ENCODE measurements at regions of chr2 and their contacts with region 1.

Region 1: DNA sequence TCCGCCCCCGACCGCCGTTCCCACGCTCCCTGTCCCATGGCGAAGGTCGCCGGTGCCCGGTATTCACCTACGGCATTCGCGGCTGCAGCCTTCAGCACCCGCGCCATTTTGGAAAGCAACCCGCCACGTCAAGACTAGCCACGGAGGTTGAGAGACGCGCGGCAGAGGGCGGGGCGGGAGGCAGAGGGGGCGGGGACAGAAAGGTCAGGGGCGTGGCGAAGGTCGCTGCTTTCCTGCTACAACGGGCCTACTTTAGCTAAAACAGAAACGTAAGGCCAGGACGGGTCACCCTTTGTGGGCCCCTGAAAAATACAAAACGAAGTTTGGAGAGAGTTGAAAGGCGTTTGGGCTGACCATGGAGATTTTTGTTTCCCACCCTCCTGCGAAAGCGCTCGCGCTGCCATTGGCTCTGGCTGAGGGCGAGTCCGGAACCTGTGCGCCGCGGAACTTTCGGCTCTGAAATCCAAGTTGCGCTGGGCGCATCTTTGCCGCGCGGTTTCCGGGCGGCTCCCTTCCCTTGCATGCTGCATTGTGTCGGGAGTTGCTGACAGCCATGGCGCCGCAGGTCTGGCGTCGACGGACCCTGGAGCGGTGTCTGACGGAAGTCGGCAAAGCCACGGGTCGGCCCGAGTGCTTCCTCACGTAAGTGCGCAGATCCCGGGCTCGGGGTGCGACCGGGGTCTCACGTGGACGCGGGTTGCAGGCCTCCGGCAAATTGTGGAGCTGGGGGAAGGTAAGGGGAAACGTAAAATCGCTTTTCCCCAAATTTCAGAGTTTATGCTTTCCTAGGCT is at the starts of genes MCEE and MPHOSPH10:
- DNase-seq: peak; percentile 81 to 87
- H3K4me3 ChIP-seq: peak within 1 kb of the TSS; percentile 88
- H3K27ac ChIP-seq: peak within 1 kb of the TSS; percentile 87
- H3K4me1 ChIP-seq: peaks cover 40% of the 10 kb centered on the region
- H3K27me3 ChIP-seq: no peaks in the 10 kb centered on the region
- CTCF ChIP-seq: no peak
- total RNA-seq, gene MCEE: 12.5 and 15.8 TPM in 2 replicates
- total RNA-seq, gene MPHOSPH10: 16.0 and 26.9 TPM in 2 replicates

Region 2: DNA sequence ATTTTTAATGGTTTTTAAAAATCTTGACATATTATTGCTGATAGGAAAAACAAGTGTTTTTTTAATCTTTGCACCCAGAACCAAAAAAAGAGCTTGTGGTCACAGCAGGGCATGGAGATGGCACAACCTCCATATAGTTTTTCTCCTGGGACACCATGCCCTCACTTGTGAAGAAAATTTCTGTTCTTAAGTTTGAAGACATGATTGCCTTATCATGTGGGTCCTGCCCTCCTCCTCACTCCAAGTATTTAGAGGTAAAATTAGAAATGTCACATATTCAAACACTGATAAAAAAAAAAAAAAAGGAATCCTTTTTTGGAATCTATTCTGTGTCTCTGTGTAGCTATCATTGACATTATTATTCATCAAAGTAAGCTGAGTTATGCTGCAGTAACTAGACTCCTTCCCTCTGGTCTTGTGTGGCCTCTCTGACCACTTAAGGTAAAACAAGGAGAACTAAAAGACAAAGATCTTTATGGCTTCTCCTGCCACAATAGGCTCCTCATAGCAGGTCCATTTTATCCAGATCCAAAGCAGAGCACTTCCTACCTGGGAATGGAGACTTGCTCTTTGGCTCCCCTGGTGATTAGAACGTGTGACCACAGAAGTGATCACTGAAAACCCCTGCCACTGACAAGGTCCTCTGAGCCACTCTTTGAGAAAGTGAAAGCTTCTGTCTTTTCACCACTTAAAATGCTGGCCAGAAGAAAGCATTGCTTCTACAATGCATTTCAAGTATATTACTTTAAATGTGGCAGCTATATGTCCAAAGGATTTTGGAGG is 382.1 kb before region 1 on chr2:
- CTCF ChIA-PET with region 1: no interaction called
- POLR2A ChIA-PET with region 1: no interaction called
- intact Hi-C with region 1: no loop called
- DNase-seq: no peak
- H3K4me3 ChIP-seq: no peak overlapping the region
- H3K27ac ChIP-seq: no peak overlapping the region
- H3K4me1 ChIP-seq: no peaks in the 10 kb centered on the region
- H3K27me3 ChIP-seq: peaks cover 35% of the 10 kb centered on the region
- CTCF ChIP-seq: no peak

Region 3: DNA sequence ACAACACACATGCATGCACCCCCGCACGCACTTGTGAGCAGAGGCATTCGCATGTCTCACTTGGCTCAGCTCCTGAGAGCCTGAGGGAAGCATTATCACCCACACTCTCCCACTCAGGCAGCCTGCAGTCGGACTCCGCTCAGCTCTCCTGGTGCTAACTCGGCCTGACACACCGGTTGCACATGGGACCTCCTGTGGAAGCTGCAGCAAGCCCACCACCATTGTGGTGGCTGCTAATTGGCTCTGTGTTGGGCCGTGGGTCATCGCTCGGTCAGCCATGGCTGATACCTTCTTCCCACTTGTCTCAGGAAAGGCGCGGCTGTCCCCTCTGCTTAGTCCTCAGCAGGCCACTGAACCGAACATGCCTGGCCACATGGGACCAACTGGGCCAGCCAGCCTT is 122.0 kb before region 1 on chr2:
- CTCF ChIA-PET with region 1: interaction called, 10 read pairs
- POLR2A ChIA-PET with region 1: no interaction called
- intact Hi-C with region 1: no loop called
- DNase-seq: no peak
- H3K4me3 ChIP-seq: no peak overlapping the region
- H3K27ac ChIP-seq: no peak overlapping the region
- H3K4me1 ChIP-seq: no peaks in the 10 kb centered on the region
- H3K27me3 ChIP-seq: no peaks in the 10 kb centered on the region
- CTCF ChIP-seq: no peak

Region 4: DNA sequence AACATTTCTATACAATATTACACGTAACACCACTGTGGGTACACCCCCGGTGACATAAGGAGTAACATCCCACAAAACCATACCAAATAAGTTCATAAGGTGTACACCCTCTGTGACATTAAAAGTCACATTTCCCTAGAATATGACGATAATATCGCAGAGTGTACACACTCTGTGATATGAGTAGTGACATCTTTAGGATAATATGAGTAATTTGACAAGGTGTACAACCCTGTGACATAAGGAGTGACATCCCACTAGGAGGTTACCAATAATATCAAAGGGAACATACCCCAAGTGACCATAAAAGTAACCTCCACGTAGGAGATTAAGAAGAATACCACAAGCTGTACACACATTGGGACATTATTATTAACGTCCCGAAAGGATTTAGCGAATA is 111.7 kb before region 1 on chr2:
- CTCF ChIA-PET with region 1: no interaction called
- POLR2A ChIA-PET with region 1: no interaction called
- intact Hi-C with region 1: loop called (anchors 2 kb)
- DNase-seq: no peak
- H3K4me3 ChIP-seq: no peak overlapping the region
- H3K27ac ChIP-seq: no peak overlapping the region
- H3K4me1 ChIP-seq: peaks cover 9% of the 10 kb centered on the region
- H3K27me3 ChIP-seq: no peaks in the 10 kb centered on the region
- CTCF ChIP-seq: no peak

Region 5: GRCh38 chr2:71068218-71069035 is 61.9 kb before region 1 on chr2 and contains the start of gene NAGK:
- CTCF ChIA-PET with region 1: no interaction called
- POLR2A ChIA-PET with region 1: interaction called, 3 read pairs
- intact Hi-C with region 1: loop called (anchors 1 kb)
- DNase-seq: peak; percentile 86 to 96
- H3K4me3 ChIP-seq: peak within 1 kb of the TSS; percentile 72
- H3K27ac ChIP-seq: peak within 1 kb of the TSS; percentile 40
- H3K4me1 ChIP-seq: peaks cover 25% of the 10 kb centered on the region
- H3K27me3 ChIP-seq: no peaks in the 10 kb centered on the region
- CTCF ChIP-seq: no peak
- total RNA-seq, gene NAGK: 32.6 and 34.1 TPM in 2 replicates

Region 6: GRCh38 chr2:71226965-71227560 is 96.8 kb after region 1 on chr2 and contains the start of gene PAIP2B:
- CTCF ChIA-PET with region 1: interaction called, 16 read pairs
- POLR2A ChIA-PET with region 1: no interaction called
- intact Hi-C with region 1: no loop called
- DNase-seq: peak; percentile 98 to 100
- H3K4me3 ChIP-seq: peak within 1 kb of the TSS; percentile 69
- H3K27ac ChIP-seq: no peak within 1 kb of the TSS
- H3K4me1 ChIP-seq: peaks cover 10% of the 10 kb centered on the region
- H3K27me3 ChIP-seq: no peaks in the 10 kb centered on the region
- CTCF ChIP-seq: 0 out of 2 replicates have a peak, but pooled peaks have one; percentile 2
- total RNA-seq, gene PAIP2B: 5.4 and 6.1 TPM in 2 replicates